CD4-positive, alpha-beta T cell (primary cell): ENCODE measurements at regions of chr11 and their contacts with region 1.

Region 1: DNA sequence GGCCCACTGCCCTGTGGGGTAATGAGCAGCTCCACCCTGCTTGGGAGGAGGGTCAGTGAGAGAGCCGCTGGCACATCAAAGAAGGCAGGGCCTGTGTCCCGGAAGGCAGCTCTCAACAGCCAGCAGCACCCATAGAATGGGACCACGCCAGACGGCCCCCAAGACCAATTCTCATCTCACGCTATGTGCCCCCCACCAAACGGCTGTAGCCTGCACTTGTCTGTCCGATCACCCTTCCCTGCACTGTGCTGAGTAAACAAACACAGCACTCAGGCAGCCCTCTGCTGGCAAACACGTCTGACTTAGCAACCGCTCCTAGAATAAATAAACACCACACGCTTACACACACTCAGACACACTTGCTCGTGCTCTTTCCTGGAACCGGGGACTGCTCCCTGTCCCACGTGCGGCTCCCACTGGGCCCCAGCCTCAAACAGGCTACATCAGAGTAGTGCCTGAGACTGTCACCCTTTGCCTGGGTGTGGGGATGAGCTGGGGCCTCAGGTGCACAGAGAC is 53.2 kb upstream of the CDON start:
- DNase-seq: peak in 2 of 14 experiments; percentile 5 to 26
- ATAC-seq: no peak
- H3K4me3 ChIP-seq: no peak overlapping the region
- H3K4me3 Mint-ChIP-seq: no peak overlapping the region
- H3K27ac ChIP-seq: no peak overlapping the region
- H3K27ac Mint-ChIP-seq: no peak overlapping the region
- H3K4me1 ChIP-seq: no peaks in the 10 kb centered on the region
- H3K4me1 Mint-ChIP-seq: no peaks in the 10 kb centered on the region
- H3K27me3 ChIP-seq: no peaks in the 10 kb centered on the region
- H3K27me3 Mint-ChIP-seq: no peaks in the 10 kb centered on the region
- CTCF ChIP-seq: no peak

Region 2: GRCh38 chr11:126007238-126007637 is 108.6 kb before region 1 on chr11:
- CTCF ChIA-PET with region 1: no interaction called
- POLR2A ChIA-PET with region 1: no interaction called
- intact Hi-C with region 1: loop called in 1 of 2 experiments (anchors 10 kb)
- DNase-seq: no peak
- ATAC-seq: no peak
- H3K4me3 ChIP-seq: no peak overlapping the region
- H3K4me3 Mint-ChIP-seq: no peak overlapping the region
- H3K27ac ChIP-seq: no peak overlapping the region
- H3K27ac Mint-ChIP-seq: no peak overlapping the region
- H3K4me1 ChIP-seq: no peaks in the 10 kb centered on the region
- H3K4me1 Mint-ChIP-seq: no peaks in the 10 kb centered on the region
- H3K27me3 ChIP-seq: no peaks in the 10 kb centered on the region
- H3K27me3 Mint-ChIP-seq: no peaks in the 10 kb centered on the region
- CTCF ChIP-seq: no peak